ENCODE measurements at regions of chr19 and their contacts with region 1.

Region 1: DNA sequence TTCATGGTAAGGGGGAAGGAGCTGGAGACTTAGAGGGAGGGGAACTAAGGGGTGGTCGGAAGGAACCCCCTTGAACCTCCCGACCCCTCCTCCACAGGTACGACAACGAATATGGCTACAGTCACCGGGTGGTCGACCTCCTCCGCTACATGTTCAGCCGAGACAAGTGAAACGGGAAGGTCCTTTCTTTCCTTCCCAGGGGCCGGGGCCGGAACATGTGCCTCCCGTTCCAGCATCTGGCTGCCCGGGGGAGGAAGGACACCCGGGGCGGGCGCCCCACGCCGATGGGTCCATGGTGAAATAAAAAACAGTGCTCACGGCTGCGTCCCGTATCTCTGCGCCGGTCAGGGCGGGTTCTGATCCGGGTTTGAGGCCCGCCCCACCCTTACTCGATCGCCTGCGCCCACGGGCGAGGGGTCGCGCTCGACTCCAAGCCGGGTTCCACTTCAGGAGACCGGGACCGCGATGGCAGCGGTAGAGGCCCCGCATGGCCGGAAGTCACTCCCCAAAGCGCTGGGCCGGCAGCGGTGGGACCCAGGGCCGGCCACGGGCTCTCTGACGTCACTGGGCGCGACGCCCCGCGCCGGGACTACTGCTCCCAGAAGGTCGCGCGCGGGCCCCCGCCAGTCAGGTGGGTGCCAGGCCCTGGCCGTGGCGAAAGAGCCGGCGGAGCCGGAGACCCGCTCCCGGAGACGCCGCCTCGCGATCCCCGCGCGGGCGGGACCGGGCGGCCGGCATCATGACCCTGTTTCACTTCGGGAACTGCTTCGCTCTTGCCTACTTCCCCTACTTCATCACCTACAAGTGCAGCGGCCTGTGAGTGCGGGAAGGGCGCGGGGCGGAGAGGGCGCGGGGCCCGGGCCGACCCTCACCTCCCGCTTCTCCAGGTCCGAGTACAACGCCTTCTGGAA is at the start of gene TMEM147:
- DNase-seq: peak; percentile 93 to 95
- ATAC-seq: peak; percentile 97 to 99 (median 99)
- H3K4me3 ChIP-seq: peak within 1 kb of the TSS; percentile 53 to 97 (median 88)
- H3K27ac ChIP-seq: peak within 1 kb of the TSS in 9 of 10 donors; percentile 61 to 94 (median 83)
- H3K4me1 ChIP-seq: peaks cover 0 to 24% (median 21%) of the 10 kb centered on the region in 9 donors
- H3K27me3 ChIP-seq: no peaks in the 10 kb centered on the region
- CTCF ChIP-seq: no peak
- total RNA-seq, gene TMEM147: 62.8 to 103 (median 74.7) TPM

Region 2: DNA sequence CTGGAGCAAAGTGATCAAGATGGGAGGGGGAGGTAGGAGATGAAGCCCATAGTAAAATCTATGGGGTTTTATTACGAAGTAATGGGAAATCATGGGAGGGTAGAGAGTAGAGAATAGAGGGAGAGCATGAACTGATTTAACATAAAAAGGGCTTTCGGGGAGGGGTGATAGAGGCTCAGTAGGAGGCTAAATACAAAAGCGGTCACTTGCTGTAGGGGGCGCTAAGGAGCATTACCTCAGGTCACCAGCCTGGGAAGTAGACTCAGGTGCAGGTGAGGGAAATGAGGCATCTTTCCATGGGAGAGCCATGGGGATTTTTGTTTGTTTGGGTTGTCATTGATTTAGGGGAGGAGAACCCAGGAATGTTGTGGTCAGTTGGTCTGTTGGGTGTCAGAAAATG is 69.1 kb before region 1 on chr19:
- intact Hi-C with region 1: no loop called
- DNase-seq: no peak
- ATAC-seq: no peak
- H3K4me3 ChIP-seq: no peak overlapping the region
- H3K27ac ChIP-seq: no peak overlapping the region
- H3K4me1 ChIP-seq: no peaks in the 10 kb centered on the region
- H3K27me3 ChIP-seq: no peaks in the 10 kb centered on the region
- CTCF ChIP-seq: no peak

Region 3: GRCh38 chr19:35612559-35613321 is 67.5 kb after region 1 on chr19 and contains the start of gene HAUS5:
- intact Hi-C with region 1: loop called in 2 of 10 experiments (anchors 5 kb)
- DNase-seq: peak; percentile 91 to 94
- ATAC-seq: peak; percentile 97 to 100 (median 99)
- H3K4me3 ChIP-seq: peak within 1 kb of the TSS; percentile 59 to 95 (median 72)
- H3K27ac ChIP-seq: peak within 1 kb of the TSS in 8 of 10 donors; percentile 57 to 87 (median 64)
- H3K4me1 ChIP-seq: peaks cover 4 to 24% (median 12%) of the 10 kb centered on the region in 9 donors
- H3K27me3 ChIP-seq: no peaks in the 10 kb centered on the region
- CTCF ChIP-seq: peak in 2 of 9 donors; percentile 17
- total RNA-seq, gene HAUS5: 3.2 to 9.3 (median 4.7) TPM

Region 4: GRCh38 chr19:35648017-35648961 is 103.0 kb after region 1 on chr19 and contains the start of gene COX6B1:
- intact Hi-C with region 1: loop called in 4 of 10 experiments (anchors 1 to 10 kb)
- DNase-seq: peak; percentile 85 to 97
- ATAC-seq: peak; percentile 78 to 88 (median 84)
- H3K4me3 ChIP-seq: peak within 1 kb of the TSS; percentile 63 to 98 (median 87)
- H3K27ac ChIP-seq: peak within 1 kb of the TSS; percentile 88 to 97 (median 95)
- H3K4me1 ChIP-seq: peaks cover 6 to 62% (median 44%) of the 10 kb centered on the region in 9 donors
- H3K27me3 ChIP-seq: no peaks in the 10 kb centered on the region
- CTCF ChIP-seq: no peak
- total RNA-seq, gene COX6B1: 1,085 to 1,585 (median 1,381) TPM